ENCODE measurements at regions of chrX and their contacts with region 1.

Region 1: GRCh38 chrX:136251041-136251991 is at the start of gene MAP7D3:
- DNase-seq: peak; percentile 33
- ATAC-seq: peak; percentile 92
- H3K4me3 ChIP-seq: peak within 1 kb of the TSS; percentile 91
- H3K27ac ChIP-seq: peak within 1 kb of the TSS; percentile 61
- H3K4me1 ChIP-seq: no peaks in the 10 kb centered on the region; the same call in 1 of the 2 replicates
- H3K27me3 ChIP-seq: no peaks in the 10 kb centered on the region
- CTCF ChIP-seq: no peak
- POLR2A ChIP-seq: peak; percentile 40; the same call in 1 of the 2 replicates
- RAD21 ChIP-seq: no peak
- total RNA-seq, gene MAP7D3: 21.7 and 23.8 TPM in 2 replicates

Region 2: GRCh38 chrX:136847876-136848337 is 596.6 kb after region 1 on chrX:
- CTCF ChIA-PET with region 1: no interaction called
- POLR2A ChIA-PET with region 1: no interaction called
- dilution Hi-C with region 1: no loop called
- in situ Hi-C with region 1: no loop called
- intact Hi-C with region 1: loop called (anchors 10 kb)
- DNase-seq: peak; percentile 73
- ATAC-seq: peak; percentile 75
- H3K4me3 ChIP-seq: no peak overlapping the region
- H3K27ac ChIP-seq: no peak overlapping the region
- H3K4me1 ChIP-seq: no peaks in the 10 kb centered on the region
- H3K27me3 ChIP-seq: no peaks in the 10 kb centered on the region
- CTCF ChIP-seq: no peak
- POLR2A ChIP-seq: no peak
- RAD21 ChIP-seq: no peak